Heart right ventricle (tissue), 16 donors: ENCODE measurements at regions of chr6 and their contacts with region 1.

Region 1: DNA sequence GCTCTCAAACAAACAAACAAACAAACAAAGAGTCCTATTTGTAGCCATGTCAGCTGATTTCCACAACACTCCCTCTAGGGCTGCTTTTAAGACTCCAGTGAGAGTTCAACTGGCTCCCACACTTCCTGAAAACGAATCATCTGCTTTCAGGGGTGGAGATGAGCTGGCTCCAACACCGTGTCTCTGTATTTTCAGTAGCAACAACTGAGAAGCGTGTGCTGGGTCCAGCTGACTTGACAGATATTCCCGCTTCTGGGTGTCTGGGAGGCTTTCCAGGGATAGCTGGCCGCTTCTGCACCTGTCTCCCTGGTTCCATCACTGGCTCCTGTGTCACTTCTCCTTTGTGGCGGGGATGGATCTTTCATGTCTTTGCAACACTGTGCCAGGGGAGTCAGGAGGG is 272.5 kb upstream of the SOX4 start:
- DNase-seq: no peak
- ATAC-seq: no peak
- H3K4me3 ChIP-seq: no peak overlapping the region
- H3K27ac ChIP-seq: no peak overlapping the region
- H3K4me1 ChIP-seq: no peaks in the 10 kb centered on the region
- H3K27me3 ChIP-seq: no peaks in the 10 kb centered on the region
- CTCF ChIP-seq: no peak

Region 2: GRCh38 chr6:21148000-21148399 is 173.1 kb before region 1 on chr6:
- intact Hi-C with region 1: no loop called
- DNase-seq: no peak
- ATAC-seq: no peak
- H3K4me3 ChIP-seq: no peak overlapping the region
- H3K27ac ChIP-seq: no peak overlapping the region
- H3K4me1 ChIP-seq: peaks cover 0 to 13% (median 0%) of the 10 kb centered on the region in 9 donors
- H3K27me3 ChIP-seq: no peaks in the 10 kb centered on the region
- CTCF ChIP-seq: no peak

Region 3: DNA sequence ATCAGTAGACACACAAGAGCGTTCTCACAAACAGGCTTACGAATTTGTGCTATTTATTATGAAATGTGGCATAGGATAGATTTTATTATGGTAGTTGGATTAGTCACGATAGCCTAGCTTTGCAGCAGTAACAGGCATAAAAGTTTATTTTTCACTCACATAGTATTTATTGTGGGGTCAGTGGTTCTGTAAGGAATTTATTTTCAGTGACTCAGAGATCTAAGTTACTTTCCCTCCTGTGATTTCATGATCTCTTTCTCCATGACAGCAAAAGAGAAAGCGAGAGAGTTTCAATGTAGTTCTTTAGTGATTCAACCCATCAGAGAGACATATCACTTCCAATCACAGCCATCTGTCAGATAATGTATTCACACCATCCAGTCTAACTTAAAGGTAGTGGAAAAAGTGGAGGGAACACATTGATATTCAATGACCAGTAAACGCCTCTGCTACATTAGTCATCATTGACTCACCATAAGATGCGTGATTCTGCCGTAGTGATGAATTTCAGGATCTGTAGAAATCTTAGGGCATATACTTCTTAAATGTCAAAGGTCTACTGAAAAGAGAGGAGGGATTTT is 1853.8 kb after region 1 on chr6:
- intact Hi-C with region 1: loop called in 1 of 10 experiments (anchors 5 kb)
- DNase-seq: no peak
- ATAC-seq: no peak
- H3K4me3 ChIP-seq: no peak overlapping the region
- H3K27ac ChIP-seq: no peak overlapping the region
- H3K4me1 ChIP-seq: peaks cover 0 to 6% (median 0%) of the 10 kb centered on the region in 9 donors
- H3K27me3 ChIP-seq: no peaks in the 10 kb centered on the region
- CTCF ChIP-seq: no peak